Activated T-helper 1 cell treated with anti-CD3 and anti-CD28 coated beads, Interleukin-12 subunit alpha, Interleukin-12 subunit beta, Interleukin-2, Interleukin-4 antibody, amounts not matched to agents 30 ng/mL and 10 ng/mL and 1 ng/mL, durations not matched to agents 14 hours and 24 hours and 36 hours (primary cell): ENCODE measurements at regions of chr7 and their contacts with region 1.

Region 1: DNA sequence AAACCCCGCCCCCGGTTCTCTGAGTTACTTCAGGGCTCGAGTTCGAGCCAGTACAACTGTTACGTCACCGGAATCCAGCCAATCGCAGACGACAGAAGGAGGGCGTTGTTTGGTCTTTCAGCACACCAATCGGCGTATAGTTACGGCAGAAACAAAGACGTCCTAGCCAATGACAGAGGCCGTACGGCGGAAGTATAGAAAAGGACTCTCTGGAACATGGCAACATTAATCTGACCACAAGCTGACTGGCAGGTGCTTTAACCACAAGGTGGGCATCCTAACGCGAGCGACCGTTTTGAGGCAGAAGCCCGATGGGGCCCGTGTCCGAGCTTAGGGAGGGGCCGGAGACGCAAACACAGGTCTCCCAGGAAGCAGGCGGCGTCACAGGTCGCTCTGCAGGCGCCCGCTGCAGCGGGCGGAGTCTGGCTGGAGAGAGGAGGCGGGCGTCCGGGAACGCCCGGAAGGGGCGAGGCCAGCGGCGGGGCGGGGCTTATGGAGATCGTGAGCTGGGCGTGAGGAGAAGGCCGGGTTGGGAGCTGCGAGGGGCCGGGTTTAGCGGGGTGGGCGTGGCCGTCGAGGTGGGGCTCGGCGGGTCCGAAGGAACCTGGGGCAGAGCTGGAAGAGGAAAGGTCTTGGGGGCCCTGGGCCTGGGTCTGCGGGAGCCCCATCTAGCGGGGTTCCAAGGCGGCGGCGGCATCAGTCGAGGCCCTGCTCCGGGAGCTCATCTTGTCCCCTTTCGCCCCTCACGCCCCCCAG is at the start of gene MOSPD3:
- DNase-seq: peak; percentile 97
- H3K4me3 Mint-ChIP-seq: peak within 1 kb of the TSS; percentile 98
- H3K27ac Mint-ChIP-seq: peak within 1 kb of the TSS; percentile 100
- H3K4me1 Mint-ChIP-seq: peaks cover 22% of the 10 kb centered on the region
- H3K27me3 Mint-ChIP-seq: peaks cover 8% of the 10 kb centered on the region
- total RNA-seq, gene MOSPD3: 10.3 and 11.5 TPM in 2 replicates

Region 2: DNA sequence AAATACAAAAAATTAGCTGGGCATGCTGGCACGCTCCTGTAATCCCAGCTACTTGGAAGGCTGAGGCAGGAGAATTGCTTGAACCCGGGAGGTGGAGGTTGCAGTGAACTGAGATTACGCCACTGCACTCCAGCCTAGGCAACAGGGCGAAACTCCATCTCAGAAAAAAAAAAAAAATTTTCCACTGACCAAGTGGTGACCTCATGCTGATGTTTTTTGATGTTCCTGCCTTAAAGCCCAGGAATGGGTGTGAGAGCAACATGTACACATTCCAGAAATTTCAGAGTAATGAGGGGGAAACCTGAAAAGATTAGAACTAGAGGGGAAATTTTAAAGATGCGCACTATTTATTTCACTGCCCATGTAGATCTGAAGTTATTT is 108.8 kb before region 1 on chr7:
- intact Hi-C with region 1: no loop called
- DNase-seq: no peak
- H3K4me3 Mint-ChIP-seq: no peak overlapping the region
- H3K27ac Mint-ChIP-seq: no peak overlapping the region
- H3K4me1 Mint-ChIP-seq: no peaks in the 10 kb centered on the region
- H3K27me3 Mint-ChIP-seq: peaks cover 10% of the 10 kb centered on the region

Region 3: GRCh38 chr7:100726996-100727761 is 115.0 kb after region 1 on chr7:
- intact Hi-C with region 1: loop called (anchors 1 kb)
- DNase-seq: no peak
- H3K4me3 Mint-ChIP-seq: no peak overlapping the region
- H3K27ac Mint-ChIP-seq: no peak overlapping the region
- H3K4me1 Mint-ChIP-seq: peaks cover 6% of the 10 kb centered on the region
- H3K27me3 Mint-ChIP-seq: peaks cover 11% of the 10 kb centered on the region

Region 4: DNA sequence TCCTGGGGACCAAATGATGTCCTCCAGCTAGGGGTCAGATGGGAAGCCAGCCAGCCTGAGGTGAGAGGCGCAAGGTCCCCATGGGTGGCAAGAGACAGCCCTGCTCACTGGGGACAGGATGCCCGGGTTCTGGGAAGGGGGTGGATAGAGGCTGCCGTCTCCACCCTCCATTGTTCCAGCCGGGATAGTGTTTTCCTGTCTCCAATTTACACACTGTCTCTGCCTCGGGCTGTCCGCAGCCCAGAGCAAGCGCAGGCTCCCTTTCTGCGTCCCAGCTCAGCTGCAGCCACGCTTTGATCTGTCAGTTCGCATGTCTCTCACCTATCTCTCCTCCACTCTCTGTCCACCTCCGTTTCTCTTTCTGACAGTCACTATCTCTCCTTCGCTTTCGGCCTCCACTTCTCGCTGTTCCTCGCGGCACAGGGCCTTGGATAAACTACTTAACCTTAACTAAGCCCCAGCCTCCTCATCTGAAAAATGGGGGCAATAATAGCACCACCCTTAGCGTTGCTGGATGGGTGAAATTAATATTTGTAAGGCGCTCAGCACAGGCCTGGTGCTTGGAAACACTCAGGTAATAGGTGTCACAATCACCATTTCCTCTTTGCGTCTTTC is 213.2 kb after region 1 on chr7:
- intact Hi-C with region 1: no loop called
- DNase-seq: no peak
- H3K4me3 Mint-ChIP-seq: no peak overlapping the region
- H3K27ac Mint-ChIP-seq: no peak overlapping the region
- H3K4me1 Mint-ChIP-seq: peaks cover 15% of the 10 kb centered on the region
- H3K27me3 Mint-ChIP-seq: peaks cover 37% of the 10 kb centered on the region